H1 (cell line): ENCODE measurements at regions of chr9 and their contacts with region 1.

Region 1: DNA sequence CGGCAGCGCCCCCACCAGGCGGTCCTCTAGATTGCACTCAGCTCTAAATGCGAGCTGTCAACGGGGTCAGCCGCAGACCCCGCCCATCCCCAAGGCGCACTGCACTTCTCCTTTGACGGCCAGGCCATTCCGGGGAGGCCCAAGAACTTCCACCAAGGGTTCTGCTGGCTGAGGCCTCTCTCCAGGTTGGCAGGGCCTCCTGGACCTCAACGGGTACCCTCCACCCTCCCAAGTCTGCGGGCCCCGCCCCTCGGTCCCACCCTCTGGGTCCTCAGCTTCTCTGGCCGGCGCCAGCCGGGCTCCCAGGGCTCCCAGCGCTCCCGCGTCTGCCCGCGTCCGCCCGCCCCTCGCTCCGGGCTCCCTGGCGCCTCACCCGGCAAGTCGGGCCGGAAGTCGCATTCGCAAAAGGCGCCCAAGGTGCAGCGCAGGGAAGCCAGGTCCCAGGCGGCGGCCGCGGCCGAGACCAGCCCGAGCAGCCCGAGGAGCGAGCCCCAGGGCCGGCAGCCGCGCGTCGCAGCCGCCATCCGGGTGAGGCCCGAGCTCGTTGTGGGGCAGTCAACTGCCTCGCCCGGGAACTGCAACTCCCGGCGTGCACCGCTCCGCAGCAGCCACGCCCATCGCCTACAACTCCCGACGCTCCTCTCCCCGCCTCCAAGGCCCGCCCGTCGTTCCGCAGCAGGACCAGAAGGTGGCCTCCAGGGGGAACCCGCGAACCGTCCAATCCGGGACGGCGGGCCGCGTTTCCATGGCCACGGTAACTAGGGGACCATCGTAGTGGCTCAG is at the start of gene TOR2A:
- DNase-seq: peak; percentile 96 to 99
- H3K4me3 ChIP-seq: peak within 1 kb of the TSS; percentile 35 to 78 (median 67)
- H3K27ac ChIP-seq: peak within 1 kb of the TSS; percentile 46; the same call in 1 of the 2 replicates
- H3K4me1 ChIP-seq: peaks cover 3 to 11% (median 6%) of the 10 kb centered on the region in 4 experiments; a peak in 6 of 7 replicates
- H3K27me3 ChIP-seq: no peaks in the 10 kb centered on the region
- CTCF ChIP-seq: peak in 2 of 3 experiments; percentile 92 to 99; a peak in 3 of 4 replicates
- EP300 ChIP-seq: peak in 1 of 2 experiments; percentile 68; a peak in 1 of 3 replicates
- POLR2A ChIP-seq: no peak
- RAD21 ChIP-seq: peak; percentile 89 to 93
- total RNA-seq, gene TOR2A: 18.4 and 18.7 TPM in 2 replicates

Region 2: GRCh38 chr9:127684576-127684975 is 50.4 kb before region 1 on chr9:
- CTCF ChIA-PET with region 1: interaction called, 11 read pairs
- POLR2A ChIA-PET with region 1: no interaction called
- DNase-seq: no peak
- H3K4me3 ChIP-seq: no peak overlapping the region
- H3K27ac ChIP-seq: no peak overlapping the region
- H3K4me1 ChIP-seq: no peaks in the 10 kb centered on the region
- H3K27me3 ChIP-seq: no peaks in the 10 kb centered on the region
- CTCF ChIP-seq: no peak
- EP300 ChIP-seq: no peak
- POLR2A ChIP-seq: no peak
- RAD21 ChIP-seq: no peak

Region 3: GRCh38 chr9:127715394-127716337 is 19.3 kb before region 1 on chr9 and contains the starts of genes PTRH1 and TTC16:
- CTCF ChIA-PET with region 1: interaction called, 24 read pairs
- POLR2A ChIA-PET with region 1: interaction called, 3 read pairs
- DNase-seq: peak; percentile 77 to 99
- H3K4me3 ChIP-seq: peak within 1 kb of the TSS; percentile 64 to 82 (median 75)
- H3K27ac ChIP-seq: no peak within 1 kb of the TSS
- H3K4me1 ChIP-seq: peaks cover 0 to 28% (median 21%) of the 10 kb centered on the region in 4 experiments; a peak in 6 of 7 replicates
- H3K27me3 ChIP-seq: 0 out of 7 replicates have a peak, but pooled peaks cover 0 to 2% (median 0%) of the 10 kb centered on the region in 4 experiments
- CTCF ChIP-seq: no peak
- EP300 ChIP-seq: no peak
- POLR2A ChIP-seq: peak in 1 of 2 experiments; percentile 45; a peak in 1 of 3 replicates
- RAD21 ChIP-seq: no peak
- total RNA-seq, gene PTRH1: 11.1 and 11.2 TPM in 2 replicates
- total RNA-seq, gene TTC16: not detected in 2 replicates

Region 4: DNA sequence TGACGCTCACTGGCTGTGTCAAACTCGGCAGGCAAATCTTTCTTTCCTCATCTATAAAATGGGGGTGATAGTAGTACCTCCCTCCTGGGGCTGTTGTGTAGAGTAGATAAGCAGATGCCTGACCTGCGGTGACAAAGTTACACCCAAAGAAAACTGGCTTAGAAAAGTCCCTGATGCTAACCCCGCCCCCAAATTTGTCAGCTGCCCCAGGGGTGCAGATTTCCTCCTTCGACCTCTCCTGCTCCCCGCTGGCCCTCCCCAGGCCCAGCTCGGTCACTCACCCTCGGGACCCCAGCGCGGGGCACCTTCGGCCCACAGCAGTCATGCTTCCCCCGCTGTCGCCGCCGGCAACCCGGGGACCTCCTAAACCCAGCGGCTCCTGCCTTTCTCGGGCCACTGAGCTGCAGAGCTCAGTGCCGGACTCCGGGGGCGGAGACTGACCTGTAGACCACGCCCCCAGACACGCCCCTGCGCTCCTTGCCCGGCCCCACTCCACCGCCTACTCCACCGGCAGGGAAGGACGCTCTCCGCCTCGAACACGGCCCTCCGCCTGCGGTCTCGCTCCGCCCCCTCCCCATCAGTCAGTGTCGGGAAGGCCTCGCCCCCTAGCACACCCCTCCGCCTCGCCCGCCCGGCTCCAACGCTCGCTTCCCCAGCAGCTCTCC is 36.1 kb after region 1 on chr9:
- CTCF ChIA-PET with region 1: interaction called, 26 read pairs
- POLR2A ChIA-PET with region 1: interaction called, 5 read pairs
- DNase-seq: peak; percentile 97 to 99
- H3K4me3 ChIP-seq: peak overlapping the region; percentile 50 to 72 (median 60)
- H3K27ac ChIP-seq: no peak overlapping the region
- H3K4me1 ChIP-seq: peaks cover 1 to 16% (median 8%) of the 10 kb centered on the region in 4 experiments
- H3K27me3 ChIP-seq: no peaks in the 10 kb centered on the region
- CTCF ChIP-seq: no peak
- EP300 ChIP-seq: no peak
- POLR2A ChIP-seq: no peak
- RAD21 ChIP-seq: no peak

Region 5: GRCh38 chr9:127916665-127917613 is 182.0 kb after region 1 on chr9 and contains the start of gene ST6GALNAC4:
- CTCF ChIA-PET with region 1: interaction called, 10 read pairs
- POLR2A ChIA-PET with region 1: no interaction called
- DNase-seq: peak in 1 of 2 experiments; percentile 97
- H3K4me3 ChIP-seq: peak within 1 kb of the TSS; percentile 55 to 70 (median 60)
- H3K27ac ChIP-seq: no peak within 1 kb of the TSS
- H3K4me1 ChIP-seq: peaks cover 4 to 8% (median 7%) of the 10 kb centered on the region in 4 experiments
- H3K27me3 ChIP-seq: peaks cover 0 to 12% (median 10%) of the 10 kb centered on the region in 4 experiments; a peak in 5 of 7 replicates
- CTCF ChIP-seq: no peak
- EP300 ChIP-seq: no peak
- POLR2A ChIP-seq: no peak
- RAD21 ChIP-seq: no peak
- total RNA-seq, gene ST6GALNAC4: 21.8 and 27.0 TPM in 2 replicates

Region 6: GRCh38 chr9:127991042-127991756 is 256.3 kb after region 1 on chr9:
- CTCF ChIA-PET with region 1: no interaction called
- POLR2A ChIA-PET with region 1: no interaction called
- DNase-seq: no peak
- H3K4me3 ChIP-seq: no peak overlapping the region
- H3K27ac ChIP-seq: no peak overlapping the region
- H3K4me1 ChIP-seq: no peaks in the 10 kb centered on the region
- H3K27me3 ChIP-seq: no peaks in the 10 kb centered on the region; a peak in 1 of 7 replicates
- CTCF ChIP-seq: no peak
- EP300 ChIP-seq: no peak
- POLR2A ChIP-seq: no peak
- RAD21 ChIP-seq: no peak